ENCODE measurements at regions of chr2 and their contacts with region 1.

Region 1: GRCh38 chr2:26685989-26686839 is 6.3 kb upstream of the KCNK3 start:
- DNase-seq: no peak
- ATAC-seq: no peak
- H3K4me3 ChIP-seq: no peak overlapping the region
- H3K27ac ChIP-seq: no peak overlapping the region
- H3K4me1 ChIP-seq: peaks cover under 1% of the 10 kb centered on the region
- H3K27me3 ChIP-seq: no peaks in the 10 kb centered on the region

Region 2: DNA sequence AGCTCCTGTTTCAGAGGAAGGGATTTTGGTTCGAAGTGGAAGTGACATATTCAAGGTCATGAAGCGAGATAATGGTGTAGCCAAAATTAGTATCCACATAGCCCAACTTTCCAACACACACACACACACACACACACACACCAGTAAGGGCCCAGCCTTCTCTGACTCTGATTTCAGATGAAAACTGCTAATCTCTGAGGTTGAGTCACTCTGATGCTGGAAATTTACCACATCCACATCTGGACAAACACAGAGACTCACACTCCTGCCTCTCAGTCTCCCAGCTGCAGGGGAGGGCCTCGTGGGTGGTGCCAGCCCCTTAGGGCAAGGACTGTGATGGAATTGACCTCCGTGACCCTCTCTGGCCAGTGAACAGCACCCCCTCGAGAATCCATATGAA is 48.9 kb after region 1 on chr2:
- intact Hi-C with region 1: loop called in 1 of 4 experiments (anchors 10 kb)
- DNase-seq: peak in 1 of 3 donors; percentile 68
- ATAC-seq: peak; percentile 61 to 82
- H3K4me3 ChIP-seq: no peak overlapping the region
- H3K27ac ChIP-seq: peak overlapping the region; percentile 0
- H3K4me1 ChIP-seq: peaks cover 4% of the 10 kb centered on the region
- H3K27me3 ChIP-seq: no peaks in the 10 kb centered on the region